Dorsolateral prefrontal cortex (tissue), 120 donors: ENCODE measurements at regions of chr3 and their contacts with region 1.

Region 1: DNA sequence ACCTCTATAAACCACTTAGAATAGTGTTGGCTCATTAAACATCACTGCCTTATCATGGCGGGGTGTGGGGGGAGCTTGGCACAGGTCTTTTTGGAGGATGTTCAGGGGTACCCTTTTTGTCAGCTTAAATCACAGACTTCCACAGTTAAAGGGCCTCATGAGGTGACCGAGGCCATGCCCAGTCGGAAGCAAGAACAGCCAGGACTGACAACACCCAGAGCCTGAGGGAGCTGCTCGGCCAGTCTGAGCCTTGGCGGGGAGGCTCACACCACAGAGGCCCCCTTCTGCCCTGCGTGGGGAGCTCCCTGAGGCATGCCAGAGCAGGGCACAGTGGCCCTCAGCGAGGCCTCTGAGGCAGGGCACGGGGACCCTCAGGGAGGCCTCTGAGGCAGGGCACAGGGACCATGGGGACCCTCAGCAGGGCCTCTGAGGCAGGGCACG is 49.5 kb downstream of the UMPS start:
- DNase-seq: no peak
- H3K4me3 ChIP-seq: no peak overlapping the region
- H3K27ac ChIP-seq: peak overlapping the region in 53 of 59 donors; percentile 1 to 93 (median 84)
- H3K27me3 ChIP-seq: no peaks in the 10 kb centered on the region
- CTCF ChIP-seq: no peak

Region 2: DNA sequence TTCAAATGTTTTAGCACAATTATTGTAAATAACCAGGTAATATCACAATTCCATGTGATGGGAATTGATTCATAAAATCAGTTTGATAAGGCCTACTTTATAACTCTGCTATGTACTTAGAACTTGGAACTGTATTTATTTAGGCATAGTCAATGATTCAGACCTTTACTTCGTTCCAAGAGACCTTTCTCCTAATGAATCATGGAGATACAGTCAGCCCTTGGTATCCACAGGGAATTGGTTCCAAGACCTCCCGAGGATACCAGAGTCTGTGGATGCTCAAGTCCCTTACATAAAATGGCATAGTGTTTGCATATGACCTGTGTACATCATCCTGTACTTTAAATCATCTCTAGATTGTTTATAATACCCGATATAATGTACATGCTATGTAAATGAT is 110.3 kb before region 1 on chr3:
- intact Hi-C with region 1: no loop called
- DNase-seq: no peak
- H3K4me3 ChIP-seq: no peak overlapping the region
- H3K27ac ChIP-seq: no peak overlapping the region
- H3K27me3 ChIP-seq: no peaks in the 10 kb centered on the region
- CTCF ChIP-seq: no peak

Region 3: DNA sequence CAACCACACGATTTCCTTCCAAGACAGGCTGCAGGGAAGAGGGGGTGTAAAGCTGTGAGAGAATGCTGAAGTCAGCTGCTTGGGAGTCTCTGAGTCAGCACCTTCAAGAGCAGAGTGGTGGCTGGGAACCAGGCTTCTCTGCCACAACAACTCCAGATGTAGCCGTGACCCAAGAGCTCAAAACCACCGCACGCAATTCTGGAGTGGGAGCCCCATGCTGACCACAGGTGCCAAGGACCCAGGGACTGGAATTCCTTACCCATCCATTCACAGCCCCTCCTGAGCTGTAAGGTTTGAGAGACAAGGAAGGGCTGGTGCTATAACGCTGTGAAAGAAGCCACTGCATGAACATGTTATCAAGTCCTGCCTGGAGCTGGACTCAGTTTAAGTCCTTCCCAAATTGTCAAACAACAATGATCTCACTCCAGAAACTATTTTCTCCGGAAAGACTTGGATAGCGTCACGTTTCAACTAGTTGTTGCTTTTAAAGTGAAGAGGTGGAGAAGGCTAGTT is 11.9 kb after region 1 on chr3:
- intact Hi-C with region 1: loop called in 1 of 2 experiments (anchors 1 kb)
- DNase-seq: peak in 2 of 10 donors; percentile 30 to 34
- H3K4me3 ChIP-seq: no peak overlapping the region
- H3K27ac ChIP-seq: peak overlapping the region in 12 of 59 donors; percentile 0 to 63 (median 21)
- H3K27me3 ChIP-seq: no peaks in the 10 kb centered on the region
- CTCF ChIP-seq: no peak